ENCODE measurements at regions of chr1 and their contacts with region 1.

Region 1: DNA sequence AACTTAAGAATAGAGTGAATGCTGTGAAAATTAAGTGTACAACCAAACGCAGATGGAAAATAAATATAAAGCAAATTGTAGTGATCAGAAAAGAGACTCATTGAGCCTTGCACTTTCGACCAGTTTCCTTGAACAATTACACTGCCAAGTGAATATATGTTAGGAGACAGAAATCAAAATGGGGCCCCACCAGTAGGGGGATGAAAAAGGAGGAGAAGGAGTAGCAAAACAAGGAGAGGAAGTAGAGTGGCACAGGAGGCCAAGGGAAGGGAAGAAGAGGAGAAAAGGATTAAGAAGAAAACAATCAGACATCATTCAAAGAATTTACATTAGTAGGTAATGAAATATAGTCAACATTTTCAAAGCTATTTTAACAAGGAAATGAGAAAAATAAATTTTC is 1770.6 kb downstream of the PLA2G4A start:
- DNase-seq: no peak
- H3K4me3 Mint-ChIP-seq: no peak overlapping the region
- H3K27ac Mint-ChIP-seq: no peak overlapping the region
- H3K4me1 Mint-ChIP-seq: no peaks in the 10 kb centered on the region
- H3K27me3 Mint-ChIP-seq: no peaks in the 10 kb centered on the region

Region 2: DNA sequence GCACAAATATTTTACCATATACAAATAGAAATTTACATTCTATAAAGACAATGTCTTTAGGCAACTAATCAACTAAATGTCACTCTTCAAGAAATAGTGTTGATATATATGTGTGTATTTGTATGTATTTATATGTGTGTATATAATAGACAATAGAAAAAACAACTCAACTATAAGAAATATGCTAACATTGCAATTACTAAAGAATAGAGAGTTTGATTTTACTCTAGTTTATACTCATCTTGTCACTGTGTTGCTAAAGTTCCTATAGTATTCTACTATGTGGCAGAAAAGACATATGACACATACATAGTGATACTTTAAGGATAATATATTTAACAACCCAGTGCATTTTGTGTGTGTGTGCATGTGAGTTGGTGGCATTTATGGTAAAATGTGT is 42.3 kb before region 1 on chr1:
- intact Hi-C with region 1: no loop called
- DNase-seq: no peak
- H3K4me3 Mint-ChIP-seq: no peak overlapping the region
- H3K27ac Mint-ChIP-seq: no peak overlapping the region
- H3K4me1 Mint-ChIP-seq: no peaks in the 10 kb centered on the region
- H3K27me3 Mint-ChIP-seq: no peaks in the 10 kb centered on the region

Region 3: GRCh38 chr1:188615321-188615720 is 16.0 kb after region 1 on chr1:
- intact Hi-C with region 1: loop called (anchors 2 kb)
- DNase-seq: no peak
- H3K4me3 Mint-ChIP-seq: no peak overlapping the region
- H3K27ac Mint-ChIP-seq: no peak overlapping the region
- H3K4me1 Mint-ChIP-seq: no peaks in the 10 kb centered on the region
- H3K27me3 Mint-ChIP-seq: no peaks in the 10 kb centered on the region

Region 4: GRCh38 chr1:188669728-188670382 is 70.5 kb after region 1 on chr1:
- intact Hi-C with region 1: no loop called
- DNase-seq: no peak
- H3K4me3 Mint-ChIP-seq: no peak overlapping the region
- H3K27ac Mint-ChIP-seq: no peak overlapping the region
- H3K4me1 Mint-ChIP-seq: no peaks in the 10 kb centered on the region
- H3K27me3 Mint-ChIP-seq: no peaks in the 10 kb centered on the region